Right ventricle myocardium superior (tissue), 1 donor: ENCODE measurements at regions of chr22 and their contacts with region 1.

Region 1: GRCh38 chr22:46661221-46661851 is 41.1 kb downstream of the GRAMD4 start:
- DNase-seq: no peak
- ATAC-seq: peak; percentile 7

Region 2: GRCh38 chr22:46587492-46588278 is 73.7 kb before region 1 on chr22:
- intact Hi-C with region 1: loop called (anchors 10 kb)
- DNase-seq: peak; percentile 69
- ATAC-seq: no peak